CD4-positive, alpha-beta T cell (primary cell): ENCODE measurements at regions of chr11 and their contacts with region 1.

Region 1: DNA sequence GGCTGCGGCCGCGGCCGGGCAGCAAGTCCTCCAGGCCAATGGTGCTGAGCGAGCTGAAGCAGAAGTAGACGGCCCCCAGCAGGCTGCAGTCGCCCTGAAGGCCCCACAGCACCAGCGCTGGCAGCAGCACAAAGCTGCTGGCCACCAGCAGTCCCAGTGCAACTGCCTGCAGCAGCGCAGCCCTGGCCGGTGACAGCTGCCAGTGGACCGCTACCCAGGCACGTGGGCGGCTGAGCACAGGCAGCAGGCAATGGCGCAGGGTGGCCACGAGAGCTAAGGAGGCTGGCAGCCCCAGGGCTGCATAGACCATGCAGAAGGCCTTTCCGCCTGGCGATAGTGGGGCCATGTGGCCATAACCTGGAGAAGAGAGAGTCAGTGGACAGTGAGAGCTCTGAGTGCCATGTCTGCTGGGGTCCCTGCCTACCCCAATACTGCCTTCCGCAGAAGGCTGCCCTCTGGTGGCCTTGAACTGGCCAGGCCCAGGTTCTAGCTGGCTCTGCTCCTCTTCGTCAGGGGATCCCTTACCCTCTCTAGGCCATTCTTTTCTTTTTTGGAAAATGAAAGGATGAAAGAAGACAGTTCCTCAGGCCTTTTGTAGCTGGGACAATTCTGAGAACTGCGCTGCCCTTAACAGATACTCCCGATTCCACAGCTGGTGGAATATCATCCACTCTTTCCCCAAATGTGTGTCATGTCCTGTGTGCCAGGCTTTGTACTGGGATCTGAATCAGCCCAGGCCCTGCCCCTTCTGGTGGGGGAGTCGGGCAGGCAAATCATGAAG is 1.9 kb downstream of the KCNK7 start:
- DNase-seq: peak in 9 of 14 experiments; percentile 37 to 67 (median 43)
- ATAC-seq: peak; percentile 62
- H3K4me3 ChIP-seq: no peak overlapping the region
- H3K4me3 Mint-ChIP-seq: no peak overlapping the region
- H3K27ac ChIP-seq: no peak overlapping the region
- H3K27ac Mint-ChIP-seq: peak overlapping the region; percentile 36
- H3K4me1 ChIP-seq: peaks cover 31% of the 10 kb centered on the region
- H3K4me1 Mint-ChIP-seq: peaks cover 17% of the 10 kb centered on the region
- H3K27me3 ChIP-seq: no peaks in the 10 kb centered on the region
- H3K27me3 Mint-ChIP-seq: no peaks in the 10 kb centered on the region
- CTCF ChIP-seq: peak; percentile 66

Region 2: GRCh38 chr11:65366340-65366773 is 227.4 kb before region 1 on chr11:
- CTCF ChIA-PET with region 1: no interaction called
- POLR2A ChIA-PET with region 1: no interaction called
- intact Hi-C with region 1: loop called (anchors 1 kb)
- DNase-seq: peak in 4 of 14 experiments; percentile 49 to 78 (median 78)
- ATAC-seq: peak; percentile 85
- H3K4me3 ChIP-seq: no peak overlapping the region
- H3K4me3 Mint-ChIP-seq: no peak overlapping the region
- H3K27ac ChIP-seq: no peak overlapping the region
- H3K27ac Mint-ChIP-seq: no peak overlapping the region
- H3K4me1 ChIP-seq: peaks cover 8% of the 10 kb centered on the region
- H3K4me1 Mint-ChIP-seq: peaks cover 7% of the 10 kb centered on the region
- H3K27me3 ChIP-seq: no peaks in the 10 kb centered on the region
- H3K27me3 Mint-ChIP-seq: no peaks in the 10 kb centered on the region
- CTCF ChIP-seq: peak; percentile 78

Region 3: DNA sequence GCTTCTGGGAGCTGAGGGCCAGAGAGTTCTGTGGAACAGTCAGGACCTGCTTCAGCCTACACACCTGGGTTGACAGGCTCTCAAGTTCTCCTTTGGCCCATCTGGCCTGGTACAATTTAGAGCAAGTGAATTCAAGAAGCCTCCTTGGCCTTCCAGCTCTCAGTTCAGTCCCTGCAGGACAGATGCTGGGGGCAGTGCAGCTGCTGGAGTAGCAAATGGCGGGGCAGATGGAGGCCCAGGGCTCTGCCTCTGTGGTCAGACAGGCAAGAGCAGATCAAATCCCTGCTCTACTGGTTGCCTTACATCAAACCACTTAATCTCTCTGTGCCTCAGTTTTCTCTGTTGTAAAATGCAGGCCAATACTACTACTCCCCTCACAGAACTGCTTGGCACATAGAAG is 10.6 kb after region 1 on chr11:
- CTCF ChIA-PET with region 1: interaction called, 13 read pairs
- POLR2A ChIA-PET with region 1: interaction called, 3 read pairs
- intact Hi-C with region 1: no loop called
- DNase-seq: no peak
- ATAC-seq: no peak
- H3K4me3 ChIP-seq: no peak overlapping the region
- H3K4me3 Mint-ChIP-seq: no peak overlapping the region
- H3K27ac ChIP-seq: no peak overlapping the region
- H3K27ac Mint-ChIP-seq: no peak overlapping the region
- H3K4me1 ChIP-seq: peaks cover 3% of the 10 kb centered on the region
- H3K4me1 Mint-ChIP-seq: peaks cover 5% of the 10 kb centered on the region
- H3K27me3 ChIP-seq: no peaks in the 10 kb centered on the region
- H3K27me3 Mint-ChIP-seq: no peaks in the 10 kb centered on the region
- CTCF ChIP-seq: no peak